ENCODE measurements at regions of chrX and their contacts with region 1.

Region 1: GRCh38 chrX:55160685-55161552 is 59.2 kb upstream of the PAGE5 start:
- DNase-seq: peak; percentile 92
- H3K4me3 Mint-ChIP-seq: peak overlapping the region; percentile 83
- H3K27ac Mint-ChIP-seq: peak overlapping the region; percentile 94
- H3K4me1 Mint-ChIP-seq: peaks cover 9% of the 10 kb centered on the region
- H3K27me3 Mint-ChIP-seq: no peaks in the 10 kb centered on the region

Region 2: GRCh38 chrX:54529552-54530357 is 631.2 kb before region 1 on chrX and contains the start of gene GNL3L:
- CTCF ChIA-PET with region 1: no interaction called
- POLR2A ChIA-PET with region 1: no interaction called
- intact Hi-C with region 1: loop called (anchors 2 kb)
- DNase-seq: peak; percentile 89
- H3K4me3 Mint-ChIP-seq: peak within 1 kb of the TSS; percentile 89
- H3K27ac Mint-ChIP-seq: peak within 1 kb of the TSS; percentile 91
- H3K4me1 Mint-ChIP-seq: peaks cover 36% of the 10 kb centered on the region
- H3K27me3 Mint-ChIP-seq: no peaks in the 10 kb centered on the region
- total RNA-seq, gene GNL3L: 45.8 to 45.9 TPM

Region 3: DNA sequence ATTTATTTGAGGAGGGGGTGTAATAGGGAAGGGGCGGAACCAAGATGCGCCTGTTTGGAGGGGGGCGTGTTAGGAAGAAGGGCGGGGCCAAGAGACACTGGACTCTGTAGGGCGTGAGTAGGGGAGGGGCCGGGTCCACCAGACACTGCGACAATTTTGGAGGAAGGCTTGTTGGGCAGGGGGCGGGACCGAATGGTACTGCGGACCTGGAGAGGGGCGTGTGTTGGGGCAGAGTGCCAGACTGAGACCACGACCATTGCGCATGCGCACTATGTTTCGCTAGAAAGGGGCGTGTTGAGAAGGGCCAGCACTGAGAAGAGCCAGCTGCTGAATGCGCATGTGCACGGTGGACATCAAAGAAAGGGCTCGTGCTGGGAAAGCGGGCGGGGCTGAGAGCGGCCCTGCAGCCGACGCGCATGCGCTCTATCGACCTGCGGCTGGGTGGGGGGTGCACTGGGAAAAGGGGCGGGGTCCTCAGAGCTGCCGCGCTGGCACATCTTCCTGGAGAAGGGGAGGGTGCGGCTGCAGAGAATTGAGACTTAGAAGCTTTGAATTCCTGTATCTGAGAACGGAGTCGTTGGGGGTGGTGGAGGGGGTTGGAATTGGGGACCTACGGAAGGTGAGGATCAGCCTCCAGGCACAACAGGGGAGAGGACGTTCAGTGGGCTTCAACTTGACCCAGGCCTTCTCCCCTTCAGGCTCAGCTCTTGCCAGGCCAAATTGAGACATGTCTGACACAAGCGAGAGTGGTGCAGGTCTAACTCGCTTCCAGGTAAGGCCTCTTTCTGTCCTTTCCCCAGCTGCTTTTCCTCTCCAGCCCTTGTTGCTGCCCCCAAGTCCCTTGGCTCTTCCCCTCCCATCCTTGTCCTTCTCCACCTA is 352.1 kb before region 1 on chrX:
- CTCF ChIA-PET with region 1: no interaction called
- POLR2A ChIA-PET with region 1: no interaction called
- intact Hi-C with region 1: loop called (anchors 5 kb)
- DNase-seq: peak; percentile 94
- H3K4me3 Mint-ChIP-seq: peak overlapping the region; percentile 90
- H3K27ac Mint-ChIP-seq: peak overlapping the region; percentile 90
- H3K4me1 Mint-ChIP-seq: peaks cover 13% of the 10 kb centered on the region
- H3K27me3 Mint-ChIP-seq: peaks cover 2% of the 10 kb centered on the region

Region 4: DNA sequence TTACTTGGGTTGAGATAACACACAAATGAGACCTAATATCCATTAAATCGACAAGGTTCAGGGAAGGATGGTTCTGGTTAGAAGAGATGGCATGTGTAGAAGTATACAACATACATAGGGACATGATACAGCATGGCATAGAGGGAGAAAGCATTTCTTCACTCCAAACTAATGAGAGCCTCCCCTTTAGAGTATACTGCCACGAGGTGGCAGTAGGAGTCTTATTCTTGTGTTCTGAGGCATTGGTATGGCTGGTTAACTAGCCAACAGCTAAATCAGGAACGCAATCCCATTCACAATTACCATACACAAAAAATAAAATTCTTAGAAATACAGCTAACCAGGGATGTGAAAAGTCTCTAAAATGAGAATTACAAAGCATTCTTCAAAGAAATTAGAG is 269.3 kb before region 1 on chrX:
- CTCF ChIA-PET with region 1: interaction called, 4 read pairs
- POLR2A ChIA-PET with region 1: no interaction called
- intact Hi-C with region 1: loop called (anchors 5 kb)
- DNase-seq: peak; percentile 26
- H3K4me3 Mint-ChIP-seq: no peak overlapping the region
- H3K27ac Mint-ChIP-seq: no peak overlapping the region
- H3K4me1 Mint-ChIP-seq: no peaks in the 10 kb centered on the region
- H3K27me3 Mint-ChIP-seq: peaks cover 9% of the 10 kb centered on the region

Region 5: DNA sequence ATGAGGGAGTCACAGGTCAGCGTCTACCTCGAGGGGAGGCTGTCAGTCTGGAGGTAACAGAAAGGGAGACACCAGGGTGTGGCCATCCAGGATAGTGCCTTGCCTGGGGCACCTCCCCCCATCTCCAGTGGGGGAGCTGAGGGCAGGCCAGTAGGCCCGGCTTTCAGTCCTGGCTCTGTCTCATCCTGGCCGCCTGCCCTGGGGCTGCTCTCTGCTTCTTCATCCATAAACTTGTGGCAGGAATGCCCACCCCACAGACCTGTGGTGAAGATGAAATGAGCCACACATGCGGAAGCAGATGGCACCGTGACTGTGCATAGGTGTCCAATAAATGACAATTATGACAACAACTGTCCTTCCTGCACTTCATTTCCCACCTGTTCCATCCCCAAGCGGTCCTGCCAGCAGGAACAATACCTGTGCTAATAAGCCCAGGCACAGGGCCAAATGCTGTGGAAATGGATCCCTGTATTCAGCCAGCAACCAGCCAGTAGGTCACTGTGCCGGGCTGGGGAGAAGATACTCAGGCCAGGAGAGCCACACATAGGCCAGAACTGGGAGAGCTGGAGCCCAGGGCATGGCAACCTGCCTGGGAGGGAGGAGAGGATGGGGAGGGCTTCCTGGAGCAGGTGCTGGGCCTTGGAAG is 210.1 kb before region 1 on chrX:
- CTCF ChIA-PET with region 1: no interaction called
- POLR2A ChIA-PET with region 1: no interaction called
- intact Hi-C with region 1: no loop called
- DNase-seq: no peak
- H3K4me3 Mint-ChIP-seq: no peak overlapping the region
- H3K27ac Mint-ChIP-seq: no peak overlapping the region
- H3K4me1 Mint-ChIP-seq: no peaks in the 10 kb centered on the region
- H3K27me3 Mint-ChIP-seq: no peaks in the 10 kb centered on the region

Region 6: DNA sequence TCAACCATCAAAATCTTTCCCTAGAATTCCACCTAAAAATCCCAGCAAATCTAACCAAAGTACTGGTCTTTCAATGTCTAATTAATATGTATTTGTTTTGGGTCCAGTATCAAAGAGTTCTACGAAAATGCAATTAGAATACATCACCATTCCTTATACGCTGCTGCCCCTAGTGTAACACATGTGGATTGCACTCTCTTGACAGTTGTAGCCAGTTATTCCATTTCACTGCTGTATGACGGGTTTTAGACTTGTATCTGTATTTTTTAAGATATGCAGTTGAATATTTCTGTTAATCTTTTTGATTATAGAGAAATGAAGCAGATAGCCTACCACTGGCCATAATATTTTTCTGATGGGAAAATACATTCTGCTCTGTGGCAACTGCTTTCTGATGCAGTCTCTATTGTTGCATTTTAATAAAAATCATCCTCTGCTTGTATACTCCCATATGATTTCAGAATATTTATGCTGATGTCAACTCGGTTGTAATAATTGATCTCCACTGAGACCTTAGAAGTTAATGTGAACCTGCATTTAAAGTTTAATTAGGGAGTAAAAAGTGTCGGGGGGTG is 103.2 kb before region 1 on chrX:
- CTCF ChIA-PET with region 1: no interaction called
- POLR2A ChIA-PET with region 1: no interaction called
- intact Hi-C with region 1: loop called (anchors 2 kb)
- DNase-seq: peak; percentile 23
- H3K4me3 Mint-ChIP-seq: peak overlapping the region; percentile 35
- H3K27ac Mint-ChIP-seq: no peak overlapping the region
- H3K4me1 Mint-ChIP-seq: peaks cover 18% of the 10 kb centered on the region
- H3K27me3 Mint-ChIP-seq: no peaks in the 10 kb centered on the region

Measured in activated CD4-positive, alpha-beta memory T cell treated with anti-CD3 and anti-CD28 coated beads for 36 hours (primary cell).